Activated CD4-positive, alpha-beta T cell treated with anti-CD3 and anti-CD28 coated beads, Interleukin-2, amount 10 ng/mL, durations not matched to agents 24 days and 14 days (primary cell): ENCODE measurements at regions of chr14 and their contacts with region 1.

Region 1: GRCh38 chr14:76926521-76927251 is 100.5 kb downstream of the LRRC74A start:
- DNase-seq: peak; percentile 93
- H3K4me3 Mint-ChIP-seq: peak overlapping the region; percentile 65
- H3K27ac Mint-ChIP-seq: peak overlapping the region; percentile 80
- H3K4me1 Mint-ChIP-seq: peaks cover 61% of the 10 kb centered on the region
- H3K27me3 Mint-ChIP-seq: no peaks in the 10 kb centered on the region

Region 2: DNA sequence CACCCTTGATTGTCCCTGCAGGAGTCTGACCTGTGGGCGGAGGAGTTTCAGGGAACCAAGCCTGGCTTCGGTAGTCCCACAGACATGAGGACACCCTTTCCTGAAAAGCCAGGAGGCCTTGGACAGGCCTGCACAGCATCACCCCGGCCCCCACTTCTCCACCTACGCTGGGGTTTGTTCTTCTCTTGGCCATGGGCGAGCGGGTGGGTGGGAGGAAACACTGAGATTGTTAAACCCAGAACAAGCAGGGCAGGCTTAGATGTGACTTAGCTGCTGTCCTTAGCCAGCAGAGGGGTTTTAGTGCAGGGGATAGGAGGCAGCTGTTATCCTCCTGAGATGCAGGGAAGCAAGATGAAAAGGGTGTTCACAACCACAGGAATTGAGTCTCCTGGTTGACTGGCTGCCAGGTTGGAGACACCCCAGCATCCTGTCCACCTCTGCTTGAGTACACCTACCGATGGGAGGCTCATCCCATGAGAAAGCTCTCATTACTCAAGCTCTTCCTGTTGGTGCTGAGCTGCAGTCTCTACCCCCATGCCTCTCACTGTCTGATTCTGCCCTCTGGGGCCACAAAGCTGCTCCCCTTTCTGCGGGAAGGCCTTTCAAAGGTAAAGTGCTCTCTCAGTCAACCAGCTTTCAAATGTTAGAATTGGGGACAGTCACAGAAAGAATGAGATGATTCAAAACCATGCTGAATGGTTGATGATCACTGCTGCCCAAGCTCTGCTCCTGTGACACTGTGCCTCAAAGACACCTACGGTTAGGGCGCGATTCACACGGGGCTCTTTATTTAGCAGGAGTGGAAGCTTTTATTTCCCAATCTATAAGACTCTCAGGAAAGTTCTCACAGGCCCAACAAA is 15.5 kb after region 1 on chr14:
- intact Hi-C with region 1: loop called (anchors 2 kb)
- DNase-seq: no peak
- H3K4me3 Mint-ChIP-seq: no peak overlapping the region
- H3K27ac Mint-ChIP-seq: peak overlapping the region; percentile 71
- H3K4me1 Mint-ChIP-seq: peaks cover 22% of the 10 kb centered on the region
- H3K27me3 Mint-ChIP-seq: no peaks in the 10 kb centered on the region

Region 3: DNA sequence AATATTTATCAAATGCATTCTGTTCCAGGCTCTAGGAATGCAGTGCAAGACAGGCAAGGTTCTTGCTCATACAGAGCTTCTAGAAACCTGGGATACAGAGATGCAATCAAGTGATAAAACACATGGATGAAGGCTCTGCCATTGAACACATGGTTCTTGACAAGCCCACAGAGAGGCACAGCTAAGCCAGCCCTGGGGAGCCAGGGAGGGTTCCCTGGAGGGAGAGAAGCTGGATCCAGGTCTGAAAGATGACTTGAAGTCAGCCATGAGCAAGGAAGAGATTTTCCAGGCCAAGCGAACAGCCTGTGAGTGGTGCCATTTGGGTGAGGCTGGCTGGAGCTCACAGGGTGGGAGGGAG is 35.6 kb after region 1 on chr14:
- intact Hi-C with region 1: loop called (anchors 5 kb)
- DNase-seq: no peak
- H3K4me3 Mint-ChIP-seq: peak overlapping the region; percentile 78
- H3K27ac Mint-ChIP-seq: peak overlapping the region; percentile 97
- H3K4me1 Mint-ChIP-seq: peaks cover 81% of the 10 kb centered on the region
- H3K27me3 Mint-ChIP-seq: peaks cover 4% of the 10 kb centered on the region

Region 4: GRCh38 chr14:77094672-77095284 is 168.1 kb after region 1 on chr14:
- intact Hi-C with region 1: no loop called
- DNase-seq: peak; percentile 93
- H3K4me3 Mint-ChIP-seq: no peak overlapping the region
- H3K27ac Mint-ChIP-seq: peak overlapping the region; percentile 22
- H3K4me1 Mint-ChIP-seq: peaks cover 31% of the 10 kb centered on the region
- H3K27me3 Mint-ChIP-seq: peaks cover 14% of the 10 kb centered on the region